ENCODE measurements at regions of chr12 and their contacts with region 1.

Region 1: GRCh38 chr12:104358347-104359003 is 54.9 kb downstream of the EID3 start:
- DNase-seq: peak; percentile 79
- ATAC-seq: peak; percentile 83
- H3K4me3 Mint-ChIP-seq: no peak overlapping the region
- H3K27ac Mint-ChIP-seq: no peak overlapping the region
- H3K4me1 Mint-ChIP-seq: peaks cover 4% of the 10 kb centered on the region
- H3K27me3 Mint-ChIP-seq: no peaks in the 10 kb centered on the region

Region 2: GRCh38 chr12:104201238-104202001 is 157.1 kb before region 1 on chr12:
- CTCF ChIA-PET with region 1: interaction called, 15 read pairs
- POLR2A ChIA-PET with region 1: no interaction called
- DNase-seq: peak; percentile 57
- ATAC-seq: peak; percentile 65
- H3K4me3 Mint-ChIP-seq: no peak overlapping the region
- H3K27ac Mint-ChIP-seq: no peak overlapping the region
- H3K4me1 Mint-ChIP-seq: peaks cover 2% of the 10 kb centered on the region
- H3K27me3 Mint-ChIP-seq: peaks cover 23% of the 10 kb centered on the region

Measured in activated CD8-positive, alpha-beta T cell treated with anti-CD3 and anti-CD28 coated beads, Interleukin-2, amount 10 ng/mL, durations not matched to agents 7 days and 5 days (primary cell).